ENCODE measurements at regions of chr15 and their contacts with region 1.

Region 1: GRCh38 chr15:67065444-67066093 is at the start of gene SMAD3:
- DNase-seq: peak; percentile 78
- H3K4me3 Mint-ChIP-seq: peak within 1 kb of the TSS; percentile 81
- H3K27ac Mint-ChIP-seq: peak within 1 kb of the TSS; percentile 87
- H3K4me1 Mint-ChIP-seq: peaks cover 49% of the 10 kb centered on the region
- H3K27me3 Mint-ChIP-seq: peaks cover 20% of the 10 kb centered on the region
- total RNA-seq, gene SMAD3: 25.2 and 28.1 TPM in 2 replicates

Region 2: DNA sequence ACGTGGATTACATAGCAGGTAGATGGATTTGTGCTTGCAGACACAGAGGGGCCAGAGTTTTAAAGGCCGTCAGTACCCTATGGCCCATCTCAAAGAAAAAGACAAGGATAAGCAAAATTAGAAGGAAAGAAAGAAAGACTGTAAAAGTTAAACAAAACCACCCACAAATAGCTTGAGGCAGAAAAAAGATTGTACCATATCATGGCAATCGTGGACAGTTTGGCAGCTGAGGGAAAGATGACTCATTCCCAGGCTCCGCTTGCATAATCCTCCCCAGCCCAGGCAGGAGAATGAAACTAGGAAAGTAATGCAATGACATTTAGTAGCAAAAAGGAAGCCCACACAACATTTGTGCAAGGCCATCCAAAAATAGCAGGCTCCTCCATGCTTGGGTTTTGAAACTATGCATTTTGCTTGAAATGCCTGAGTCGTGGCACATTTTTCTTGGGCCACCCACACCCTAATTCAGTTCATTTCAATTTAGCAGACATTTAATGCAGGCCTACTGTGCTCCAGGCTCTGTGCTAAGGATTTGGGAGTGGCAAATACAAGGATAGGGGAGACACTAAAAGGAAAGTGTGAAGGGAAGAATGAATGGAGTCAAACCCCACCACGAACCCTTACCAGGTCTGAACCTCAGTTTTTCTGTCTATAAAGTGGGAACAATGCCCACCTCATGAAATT is 41.1 kb before region 1 on chr15:
- intact Hi-C with region 1: loop called (anchors 1 kb)
- DNase-seq: no peak
- H3K4me3 Mint-ChIP-seq: peak overlapping the region; percentile 6
- H3K27ac Mint-ChIP-seq: no peak overlapping the region
- H3K4me1 Mint-ChIP-seq: peaks cover 38% of the 10 kb centered on the region
- H3K27me3 Mint-ChIP-seq: peaks cover 18% of the 10 kb centered on the region

Region 3: GRCh38 chr15:67080900-67081431 is 15.4 kb after region 1 on chr15:
- intact Hi-C with region 1: loop called (anchors 1 kb)
- DNase-seq: no peak
- H3K4me3 Mint-ChIP-seq: no peak overlapping the region
- H3K27ac Mint-ChIP-seq: peak overlapping the region; percentile 78
- H3K4me1 Mint-ChIP-seq: peaks cover 91% of the 10 kb centered on the region
- H3K27me3 Mint-ChIP-seq: no peaks in the 10 kb centered on the region

Region 4: DNA sequence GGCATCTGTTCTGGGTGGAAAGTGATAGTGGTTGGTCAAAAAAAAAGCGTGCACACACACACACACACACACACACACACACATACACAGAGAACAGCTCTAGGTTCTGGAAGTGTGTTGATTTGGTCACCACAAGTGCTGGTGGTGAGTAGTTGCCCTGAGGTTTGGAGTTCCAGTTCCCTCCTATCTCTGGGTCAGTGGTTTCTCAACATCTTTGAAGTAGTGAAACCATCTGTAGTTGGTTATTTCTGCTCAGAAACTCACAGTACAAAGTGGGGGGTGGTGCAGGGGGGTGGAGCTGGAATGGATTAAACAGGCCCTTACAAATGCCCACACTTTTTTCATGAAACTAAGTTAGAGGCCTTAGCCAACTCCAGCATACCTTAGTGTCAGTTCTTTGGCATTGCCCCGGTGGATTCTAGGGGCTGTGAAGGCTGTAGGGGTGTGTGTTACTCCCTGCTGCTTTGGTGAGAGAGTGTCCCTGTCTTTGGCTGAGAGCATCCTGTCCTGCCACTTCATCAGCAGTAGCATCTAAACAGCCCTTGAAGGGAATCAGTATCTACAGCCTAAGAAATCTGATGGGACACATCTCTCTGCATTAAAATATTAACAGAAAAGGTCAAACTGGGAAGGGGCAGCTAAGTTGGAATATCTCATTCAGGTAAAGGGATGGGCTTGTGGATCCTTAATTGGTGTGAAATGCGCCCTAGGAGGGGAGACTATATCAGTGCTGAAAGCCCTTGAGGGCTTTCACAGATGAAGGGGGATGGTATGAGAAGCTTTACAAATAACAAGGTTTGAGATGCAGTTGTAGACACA is 20.5 kb after region 1 on chr15:
- intact Hi-C with region 1: loop called (anchors 1 kb)
- DNase-seq: peak; percentile 44
- H3K4me3 Mint-ChIP-seq: peak overlapping the region; percentile 24
- H3K27ac Mint-ChIP-seq: peak overlapping the region; percentile 74
- H3K4me1 Mint-ChIP-seq: peaks cover 94% of the 10 kb centered on the region
- H3K27me3 Mint-ChIP-seq: no peaks in the 10 kb centered on the region

Region 5: DNA sequence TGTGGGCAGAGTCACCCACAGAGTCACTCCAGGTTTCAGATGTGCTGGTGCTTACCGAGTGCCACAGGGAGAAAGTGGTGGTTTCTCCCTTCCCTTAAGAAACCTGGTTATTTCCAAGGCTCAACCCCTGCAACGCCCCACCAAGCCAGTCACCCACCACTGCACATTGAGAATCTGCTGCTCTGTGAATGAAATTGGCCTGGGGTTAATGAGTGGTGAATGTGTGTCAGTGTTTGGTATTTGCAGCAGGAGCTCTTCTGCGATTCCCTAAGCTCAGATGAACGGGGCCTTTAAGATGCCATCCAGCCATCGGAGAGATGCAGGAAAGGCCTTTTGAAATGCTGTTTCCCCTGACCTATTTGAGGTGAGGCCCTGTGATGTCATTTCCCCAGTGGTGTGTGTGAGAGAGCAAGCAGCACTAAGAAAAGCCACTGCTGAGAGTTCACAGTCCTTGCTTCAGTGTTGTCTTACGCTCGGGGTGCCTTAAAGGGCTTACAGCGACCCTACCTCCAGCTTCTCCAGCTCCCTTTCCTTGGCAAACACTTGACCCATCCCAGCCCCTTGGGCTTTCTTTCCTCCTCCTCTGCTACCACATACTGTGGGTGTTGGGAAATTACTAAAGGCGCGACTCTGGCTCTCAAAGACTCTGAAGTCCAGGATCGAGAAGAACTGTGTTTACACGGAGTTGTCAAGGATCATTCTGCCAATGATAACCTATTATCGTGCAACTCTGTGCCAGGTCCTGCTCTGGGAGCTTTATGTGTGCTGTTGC is 68.7 kb after region 1 on chr15:
- intact Hi-C with region 1: loop called (anchors 5 kb)
- DNase-seq: peak; percentile 56
- H3K4me3 Mint-ChIP-seq: peak overlapping the region; percentile 79
- H3K27ac Mint-ChIP-seq: peak overlapping the region; percentile 97
- H3K4me1 Mint-ChIP-seq: peaks cover 81% of the 10 kb centered on the region
- H3K27me3 Mint-ChIP-seq: no peaks in the 10 kb centered on the region

Region 6: DNA sequence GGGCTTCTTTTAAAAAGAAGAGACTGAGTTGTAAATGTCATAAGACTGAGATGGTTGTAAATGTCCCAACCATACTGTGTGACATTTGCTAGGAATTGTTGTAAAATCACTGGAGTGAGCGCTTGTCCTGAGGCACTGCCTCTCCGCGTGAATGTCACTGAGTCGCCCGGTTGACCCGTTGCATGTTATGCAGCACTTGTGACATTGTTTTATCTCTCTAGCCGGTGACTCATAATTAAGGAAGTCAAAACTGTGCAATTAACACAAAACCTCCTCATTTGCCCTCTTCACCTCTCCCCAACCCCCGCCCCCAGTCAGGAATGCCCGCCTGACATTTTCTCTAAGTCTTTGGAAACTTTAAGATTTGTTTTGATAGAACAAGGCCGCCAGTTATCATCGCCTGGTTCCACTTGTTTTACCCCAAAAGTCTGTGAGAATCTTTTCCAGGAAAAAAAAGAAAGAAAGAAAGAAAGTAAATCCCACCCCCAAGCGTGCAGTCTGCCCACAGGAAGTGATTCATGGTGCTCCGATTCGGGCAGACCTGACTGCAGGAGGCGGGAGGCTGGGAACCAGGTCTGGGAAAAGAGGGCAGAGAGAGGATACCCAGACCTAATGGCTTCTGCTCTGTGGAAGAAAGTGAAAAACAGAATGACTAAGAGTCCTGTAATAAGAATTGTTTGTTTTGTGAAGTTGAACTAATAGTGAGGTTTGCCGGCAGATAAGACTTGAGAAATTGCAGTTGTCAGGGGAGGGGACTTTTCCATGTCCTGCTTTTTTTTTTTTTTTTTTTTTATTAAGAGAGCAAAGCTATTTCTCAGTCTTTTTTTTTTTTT is 84.7 kb after region 1 on chr15:
- intact Hi-C with region 1: loop called (anchors 1 kb)
- DNase-seq: no peak
- H3K4me3 Mint-ChIP-seq: peak overlapping the region; percentile 46
- H3K27ac Mint-ChIP-seq: peak overlapping the region; percentile 71
- H3K4me1 Mint-ChIP-seq: peaks cover 60% of the 10 kb centered on the region
- H3K27me3 Mint-ChIP-seq: no peaks in the 10 kb centered on the region

Region 7: GRCh38 chr15:67303490-67304363 is 238.2 kb after region 1 on chr15:
- intact Hi-C with region 1: loop called (anchors 5 kb)
- DNase-seq: no peak
- H3K4me3 Mint-ChIP-seq: no peak overlapping the region
- H3K27ac Mint-ChIP-seq: no peak overlapping the region
- H3K4me1 Mint-ChIP-seq: peaks cover 8% of the 10 kb centered on the region
- H3K27me3 Mint-ChIP-seq: peaks cover 32% of the 10 kb centered on the region

Measured in activated T-helper 2 cell treated with anti-CD3 and anti-CD28 coated beads, Interferon-gamma antibody, Interleukin-2, Interleukin-4, amounts not matched to agents 10 μg/mL and 5 μg/mL and 100 μg/mL, durations not matched to agents 14 hours and 24 hours and 36 hours (primary cell).